Motor neuron (in vitro differentiated cells): ENCODE measurements at regions of chr4 and their contacts with region 1.

Region 1: DNA sequence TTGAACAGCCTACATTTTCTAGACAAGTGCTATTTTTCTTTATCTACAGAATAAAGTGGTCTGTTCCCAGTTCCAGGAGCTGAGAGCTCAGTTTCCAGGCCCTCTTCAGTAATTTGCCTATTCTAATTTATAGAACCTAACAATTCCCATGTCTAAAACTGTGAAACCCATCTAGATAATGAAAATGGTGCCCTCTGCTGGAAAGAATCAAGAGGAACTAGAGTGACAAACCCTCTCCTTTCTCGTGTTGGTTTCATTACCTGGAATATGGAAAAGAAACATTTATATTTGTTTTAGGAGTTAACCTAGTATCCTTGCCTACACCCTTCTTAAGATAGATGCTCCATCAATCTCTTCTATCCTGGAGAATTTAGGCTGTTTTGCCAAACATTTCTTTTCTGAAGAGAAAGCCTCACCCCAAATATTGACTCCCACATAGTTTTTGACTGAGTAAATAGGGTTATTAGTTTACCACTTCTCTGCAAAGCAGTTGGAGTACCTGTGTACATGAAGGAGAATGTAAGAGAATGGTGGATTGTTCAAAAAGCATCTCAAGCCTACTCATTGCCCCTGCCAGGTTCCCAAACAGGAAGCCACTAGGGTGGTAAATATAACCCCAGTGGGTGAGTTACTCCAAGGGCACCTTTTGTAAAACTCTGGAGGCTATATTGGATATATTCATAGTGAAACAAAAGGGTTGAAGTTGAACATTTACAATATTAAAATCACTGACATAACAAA is 121.6 kb downstream of the RASL11B start:
- ATAC-seq: peak in 6 of 8 experiments; percentile 27 to 84 (median 62)
- H3K4me3 ChIP-seq: no peak overlapping the region
- H3K27ac ChIP-seq: no peak overlapping the region
- H3K4me1 ChIP-seq: peaks cover 9 to 16% of the 10 kb centered on the region in 2 donors

Region 2: GRCh38 chr4:52234561-52235440 is 748.9 kb before region 1 on chr4:
- in situ Hi-C with region 1: loop called in 3 of 9 experiments (anchors 10 to 25 kb)
- ATAC-seq: peak in 7 of 8 experiments; percentile 38 to 99 (median 56)
- H3K4me3 ChIP-seq: no peak overlapping the region
- H3K27ac ChIP-seq: no peak overlapping the region
- H3K4me1 ChIP-seq: peaks cover 0 to 2% of the 10 kb centered on the region in 2 donors

Region 3: DNA sequence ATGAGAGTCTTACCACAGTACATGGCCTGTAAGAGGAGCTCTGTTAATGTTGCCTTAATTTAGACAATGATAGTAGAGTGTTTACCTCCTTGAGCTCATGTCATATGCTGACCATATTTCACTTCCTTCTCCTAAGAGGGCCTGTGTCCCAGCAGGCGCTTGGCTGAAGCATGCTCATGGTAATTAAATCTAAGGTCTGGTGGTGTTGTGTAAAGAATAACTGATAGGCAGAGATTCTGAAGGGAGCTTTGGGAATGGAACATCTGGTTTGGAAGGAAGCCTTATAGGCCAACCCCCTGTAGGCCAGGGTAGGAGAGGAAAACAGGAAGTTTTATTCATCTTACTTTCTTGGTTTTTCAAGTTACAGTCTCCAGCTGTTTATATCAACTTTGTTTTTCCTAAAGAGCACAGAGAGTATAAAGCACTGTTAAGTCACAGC is 624.8 kb before region 1 on chr4:
- in situ Hi-C with region 1: loop called in 2 of 9 experiments (anchors 25 kb)
- ATAC-seq: peak in 1 of 8 experiments; percentile 52
- H3K4me3 ChIP-seq: no peak overlapping the region
- H3K27ac ChIP-seq: no peak overlapping the region
- H3K4me1 ChIP-seq: no peaks in the 10 kb centered on the region

Region 4: DNA sequence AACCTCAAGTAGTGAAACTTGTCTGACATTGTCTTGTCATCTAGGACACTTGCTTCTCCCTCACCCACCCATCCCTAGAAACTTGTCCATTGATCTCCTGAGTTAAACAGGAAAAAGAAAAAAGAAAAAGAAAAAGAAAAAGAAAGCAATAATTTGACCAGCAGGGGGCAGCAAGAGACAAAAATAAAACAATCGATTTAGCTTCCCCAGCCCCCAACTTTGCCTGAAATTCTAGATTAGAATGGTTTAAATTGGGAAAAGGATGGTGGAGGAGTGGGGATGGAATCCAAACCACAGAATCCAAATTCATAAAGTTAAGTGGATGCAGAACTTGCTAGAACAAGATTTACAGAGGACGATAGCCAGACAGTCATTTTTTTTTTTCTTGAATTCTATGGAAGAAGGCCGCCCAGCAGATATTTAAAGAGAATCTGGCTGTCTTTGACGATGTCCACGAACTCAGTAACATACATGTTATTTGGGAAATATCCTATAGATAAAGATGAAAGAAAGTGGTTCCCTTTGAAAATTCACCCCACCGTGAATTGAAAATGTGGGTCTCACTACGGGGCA is 607.5 kb before region 1 on chr4:
- in situ Hi-C with region 1: loop called in 6 of 9 experiments (anchors 10 to 25 kb)
- ATAC-seq: peak in 2 of 8 experiments; percentile 31 to 53
- H3K4me3 ChIP-seq: no peak overlapping the region
- H3K27ac ChIP-seq: no peak overlapping the region
- H3K4me1 ChIP-seq: no peaks in the 10 kb centered on the region

Region 5: DNA sequence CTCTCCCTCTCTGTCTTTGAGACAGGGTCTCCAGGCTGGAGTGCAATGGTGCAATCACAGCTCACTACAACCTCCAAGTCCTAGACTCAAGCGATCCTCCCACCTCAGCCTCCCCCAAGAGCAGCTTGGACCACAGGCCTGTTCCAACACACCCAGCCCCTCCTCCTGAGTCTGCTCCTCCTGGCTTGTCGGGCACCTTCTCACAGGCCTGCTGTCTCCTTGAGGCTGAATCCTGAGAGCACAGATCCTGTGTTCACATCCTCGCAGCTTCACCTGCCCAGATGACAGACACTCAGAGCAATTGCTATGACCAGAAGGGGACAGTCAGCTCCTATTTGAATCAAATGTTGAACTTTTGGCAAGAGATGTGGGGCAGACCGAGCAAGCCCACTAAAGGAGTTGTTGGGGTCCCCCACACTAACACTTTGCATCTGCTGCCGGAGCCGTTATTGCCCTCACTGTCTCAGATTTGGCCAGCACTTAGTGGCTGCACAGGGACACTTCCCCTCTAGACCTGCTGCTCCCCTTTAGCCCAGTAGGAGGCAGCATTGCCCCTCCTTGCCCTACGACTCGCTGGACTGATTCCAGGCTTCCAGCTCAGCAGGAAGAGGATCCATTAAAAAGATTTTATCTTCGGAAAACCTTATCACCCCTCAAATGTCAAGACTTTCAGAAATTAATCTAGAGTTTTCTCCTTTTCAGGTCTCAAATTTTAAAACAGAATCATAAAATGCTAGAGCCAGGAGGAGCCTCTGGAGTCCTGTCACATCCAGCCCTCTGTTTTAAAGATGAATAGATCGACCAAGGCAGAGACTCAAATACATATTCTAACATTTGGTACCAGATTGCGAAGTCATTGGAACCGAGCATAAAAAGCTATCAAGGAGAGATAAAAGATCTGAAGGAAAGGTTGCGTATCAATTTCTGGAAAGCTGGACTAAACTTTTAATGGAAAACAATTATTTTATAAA is 438.3 kb before region 1 on chr4:
- in situ Hi-C with region 1: loop called in 4 of 9 experiments (anchors 10 to 25 kb)
- ATAC-seq: peak in 7 of 8 experiments; percentile 47 to 83 (median 79)
- H3K4me3 ChIP-seq: no peak overlapping the region
- H3K27ac ChIP-seq: no peak overlapping the region
- H3K4me1 ChIP-seq: no peaks in the 10 kb centered on the region

Region 6: GRCh38 chr4:52572936-52573485 is 410.7 kb before region 1 on chr4:
- in situ Hi-C with region 1: loop called in 2 of 9 experiments (anchors 25 kb)
- ATAC-seq: peak in 2 of 8 experiments; percentile 59 to 71
- H3K4me3 ChIP-seq: no peak overlapping the region
- H3K27ac ChIP-seq: no peak overlapping the region
- H3K4me1 ChIP-seq: no peaks in the 10 kb centered on the region

Region 7: DNA sequence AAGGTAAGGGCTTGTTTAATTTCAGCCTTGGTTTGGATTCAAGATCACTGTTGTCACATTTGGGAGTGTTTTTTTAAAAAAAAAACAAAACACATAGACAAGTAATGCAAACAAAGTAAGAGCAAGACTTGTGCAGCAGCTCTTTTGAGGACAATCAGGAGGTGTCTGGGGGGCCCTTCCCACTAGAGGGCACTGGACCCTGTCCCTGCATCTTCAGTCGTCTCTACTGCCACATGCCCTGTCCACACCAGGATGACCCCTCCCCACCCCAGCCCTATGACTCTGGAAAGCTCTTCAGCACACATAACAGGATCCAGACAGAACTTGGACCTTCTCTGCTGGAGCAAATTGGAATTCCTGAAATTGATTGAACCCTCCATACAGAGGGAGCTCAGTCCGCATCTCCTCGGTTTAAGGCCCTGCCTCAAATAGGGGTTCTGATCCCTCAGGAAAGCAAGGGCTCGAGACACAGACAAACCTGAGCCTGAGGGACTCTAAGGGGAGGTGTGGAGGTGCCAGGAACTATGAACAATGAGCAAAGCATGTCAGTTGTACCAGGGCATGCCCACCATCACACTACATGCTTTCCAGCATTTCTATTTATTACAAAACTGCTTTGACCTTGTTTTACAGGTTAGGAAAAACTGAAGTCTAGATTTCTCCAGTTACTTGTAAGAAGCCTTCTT is 395.5 kb before region 1 on chr4:
- in situ Hi-C with region 1: loop called in 1 of 9 experiments (anchors 25 kb)
- ATAC-seq: peak in 4 of 8 experiments; percentile 29 to 77 (median 38)
- H3K4me3 ChIP-seq: no peak overlapping the region
- H3K27ac ChIP-seq: no peak overlapping the region
- H3K4me1 ChIP-seq: no peaks in the 10 kb centered on the region